ENCODE measurements at regions of chr19 and their contacts with region 1.

Region 1: GRCh38 chr19:13905938-13906904 is at the starts of genes BRME1 and CC2D1A:
- DNase-seq: peak; percentile 95
- ATAC-seq: peak; percentile 98
- H3K4me3 ChIP-seq: peak within 1 kb of the TSS; percentile 38 to 90 (median 82)
- H3K4me3 Mint-ChIP-seq: peak within 1 kb of the TSS; percentile 89
- H3K27ac ChIP-seq: peak within 1 kb of the TSS; percentile 52 to 62
- H3K27ac Mint-ChIP-seq: peak within 1 kb of the TSS; percentile 80
- H3K4me1 ChIP-seq: peaks cover 9 to 13% of the 10 kb centered on the region in 2 donors
- H3K4me1 Mint-ChIP-seq: peaks cover 13% of the 10 kb centered on the region
- H3K27me3 ChIP-seq: no peaks in the 10 kb centered on the region
- H3K27me3 Mint-ChIP-seq: no peaks in the 10 kb centered on the region
- CTCF ChIP-seq: no peak
- total RNA-seq, gene BRME1: 1.7 and 2.4 TPM in 2 replicates
- total RNA-seq, gene CC2D1A: 47.1 and 47.2 TPM in 2 replicates

Region 2: GRCh38 chr19:13937479-13938300 is 31.5 kb after region 1 on chr19:
- CTCF ChIA-PET with region 1: no interaction called
- POLR2A ChIA-PET with region 1: no interaction called
- intact Hi-C with region 1: no loop called
- DNase-seq: no peak
- ATAC-seq: no peak
- H3K4me3 ChIP-seq: no peak overlapping the region
- H3K4me3 Mint-ChIP-seq: no peak overlapping the region
- H3K27ac ChIP-seq: no peak overlapping the region
- H3K27ac Mint-ChIP-seq: no peak overlapping the region
- H3K4me1 ChIP-seq: peaks cover 0 to 4% of the 10 kb centered on the region in 2 donors
- H3K4me1 Mint-ChIP-seq: peaks cover 10% of the 10 kb centered on the region
- H3K27me3 ChIP-seq: peaks cover 0 to 22% (median 10%) of the 10 kb centered on the region in 4 experiments
- H3K27me3 Mint-ChIP-seq: peaks cover 16% of the 10 kb centered on the region
- CTCF ChIP-seq: no peak

Region 3: GRCh38 chr19:13986348-13986904 is 80.2 kb after region 1 on chr19:
- CTCF ChIA-PET with region 1: interaction called, 3 read pairs
- POLR2A ChIA-PET with region 1: interaction called, 3 read pairs
- intact Hi-C with region 1: loop called (anchors 1 kb)
- DNase-seq: peak; percentile 98
- ATAC-seq: peak; percentile 82
- H3K4me3 ChIP-seq: peak overlapping the region; percentile 9 to 54 (median 35)
- H3K4me3 Mint-ChIP-seq: peak overlapping the region; percentile 71
- H3K27ac ChIP-seq: peak overlapping the region; percentile 95 to 99
- H3K27ac Mint-ChIP-seq: peak overlapping the region; percentile 99
- H3K4me1 ChIP-seq: peaks cover 59 to 69% of the 10 kb centered on the region in 2 donors
- H3K4me1 Mint-ChIP-seq: peaks cover 67% of the 10 kb centered on the region
- H3K27me3 ChIP-seq: no peaks in the 10 kb centered on the region
- H3K27me3 Mint-ChIP-seq: no peaks in the 10 kb centered on the region
- CTCF ChIP-seq: no peak

Region 4: GRCh38 chr19:14031719-14032480 is 125.7 kb after region 1 on chr19 and contains the start of gene IL27RA:
- CTCF ChIA-PET with region 1: interaction called, 10 read pairs
- POLR2A ChIA-PET with region 1: interaction called, 6 read pairs
- intact Hi-C with region 1: loop called (anchors 1 kb)
- DNase-seq: peak; percentile 84
- ATAC-seq: peak; percentile 72
- H3K4me3 ChIP-seq: peak within 1 kb of the TSS; percentile 26 to 95 (median 83)
- H3K4me3 Mint-ChIP-seq: peak within 1 kb of the TSS; percentile 94
- H3K27ac ChIP-seq: peak within 1 kb of the TSS; percentile 83 to 94
- H3K27ac Mint-ChIP-seq: peak within 1 kb of the TSS; percentile 94
- H3K4me1 ChIP-seq: peaks cover 22 to 42% of the 10 kb centered on the region in 2 donors
- H3K4me1 Mint-ChIP-seq: peaks cover 38% of the 10 kb centered on the region
- H3K27me3 ChIP-seq: no peaks in the 10 kb centered on the region
- H3K27me3 Mint-ChIP-seq: no peaks in the 10 kb centered on the region
- CTCF ChIP-seq: peak; percentile 68
- total RNA-seq, gene IL27RA: 38.2 and 38.6 TPM in 2 replicates

Region 5: DNA sequence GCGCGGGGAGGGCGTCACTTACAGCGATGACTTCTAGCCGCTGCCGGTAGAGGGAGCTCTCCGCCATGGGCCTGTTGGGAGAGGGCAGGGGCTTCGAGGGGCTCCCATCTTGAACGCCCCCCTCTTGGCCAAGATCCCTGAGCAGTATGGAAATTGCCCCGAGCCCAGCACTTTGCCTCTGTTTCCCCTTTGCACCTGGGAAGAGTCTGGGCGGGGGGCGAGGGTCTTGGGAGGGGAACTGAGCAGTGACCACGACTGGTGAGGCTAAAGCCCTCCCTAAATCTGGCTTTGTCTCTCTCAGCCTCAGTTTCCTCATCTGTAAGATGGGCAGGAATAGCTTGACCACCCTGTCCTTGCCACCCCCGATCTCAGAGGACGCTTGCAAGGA is 152.9 kb after region 1 on chr19:
- CTCF ChIA-PET with region 1: interaction called, 18 read pairs
- POLR2A ChIA-PET with region 1: no interaction called
- intact Hi-C with region 1: no loop called
- DNase-seq: peak; percentile 68
- ATAC-seq: no peak
- H3K4me3 ChIP-seq: no peak overlapping the region
- H3K4me3 Mint-ChIP-seq: no peak overlapping the region
- H3K27ac ChIP-seq: no peak overlapping the region
- H3K27ac Mint-ChIP-seq: no peak overlapping the region
- H3K4me1 ChIP-seq: peaks cover 18 to 22% of the 10 kb centered on the region in 2 donors
- H3K4me1 Mint-ChIP-seq: peaks cover 18% of the 10 kb centered on the region
- H3K27me3 ChIP-seq: peaks cover 0 to 54% (median 28%) of the 10 kb centered on the region in 4 experiments
- H3K27me3 Mint-ChIP-seq: peaks cover 37% of the 10 kb centered on the region
- CTCF ChIP-seq: peak; percentile 81

Measured in B cell (primary cell).